PC-9 (cell line): ENCODE measurements at regions of chr1 and their contacts with region 1.

Region 1: GRCh38 chr1:117541003-117541402 is 64.8 kb upstream of the TENT5C start:
- DNase-seq: peak in 1 of 2 experiments; percentile 37
- H3K4me3 ChIP-seq: no peak overlapping the region
- H3K27ac ChIP-seq: no peak overlapping the region
- H3K4me1 ChIP-seq: peaks cover 24% of the 10 kb centered on the region
- H3K27me3 ChIP-seq: no peaks in the 10 kb centered on the region
- CTCF ChIP-seq: no peak

Region 2: GRCh38 chr1:117570988-117571409 is 30.0 kb after region 1 on chr1:
- CTCF ChIA-PET with region 1: no interaction called
- POLR2A ChIA-PET with region 1: no interaction called
- intact Hi-C with region 1: loop called (anchors 2 kb)
- DNase-seq: peak; percentile 77 to 100
- H3K4me3 ChIP-seq: peak overlapping the region; percentile 49; the same call in 1 of the 2 replicates
- H3K27ac ChIP-seq: peak overlapping the region; percentile 84
- H3K4me1 ChIP-seq: peaks cover 41% of the 10 kb centered on the region
- H3K27me3 ChIP-seq: no peaks in the 10 kb centered on the region
- CTCF ChIP-seq: no peak

Region 3: GRCh38 chr1:117753232-117753631 is 212.2 kb after region 1 on chr1:
- CTCF ChIA-PET with region 1: no interaction called
- POLR2A ChIA-PET with region 1: no interaction called
- intact Hi-C with region 1: no loop called
- DNase-seq: peak in 1 of 2 experiments; percentile 25
- H3K4me3 ChIP-seq: no peak overlapping the region
- H3K27ac ChIP-seq: no peak overlapping the region
- H3K4me1 ChIP-seq: peaks cover 20% of the 10 kb centered on the region
- H3K27me3 ChIP-seq: no peaks in the 10 kb centered on the region
- CTCF ChIP-seq: no peak